BJ (cell line): ENCODE measurements at regions of chr22 and their contacts with region 1.

Region 1: GRCh38 chr22:37588546-37589215 is 8.8 kb upstream of the LGALS2 start:
- DNase-seq: no peak
- H3K4me3 ChIP-seq: no peak overlapping the region
- H3K27me3 ChIP-seq: peaks cover 10% of the 10 kb centered on the region
- CTCF ChIP-seq: no peak

Region 2: GRCh38 chr22:37538590-37539357 is 49.9 kb before region 1 on chr22:
- CTCF ChIA-PET with region 1: interaction called, 338 read pairs
- POLR2A ChIA-PET with region 1: interaction called, 3 read pairs
- DNase-seq: peak; percentile 45
- H3K4me3 ChIP-seq: no peak overlapping the region
- H3K27me3 ChIP-seq: no peaks in the 10 kb centered on the region
- CTCF ChIP-seq: peak; percentile 93

Region 3: DNA sequence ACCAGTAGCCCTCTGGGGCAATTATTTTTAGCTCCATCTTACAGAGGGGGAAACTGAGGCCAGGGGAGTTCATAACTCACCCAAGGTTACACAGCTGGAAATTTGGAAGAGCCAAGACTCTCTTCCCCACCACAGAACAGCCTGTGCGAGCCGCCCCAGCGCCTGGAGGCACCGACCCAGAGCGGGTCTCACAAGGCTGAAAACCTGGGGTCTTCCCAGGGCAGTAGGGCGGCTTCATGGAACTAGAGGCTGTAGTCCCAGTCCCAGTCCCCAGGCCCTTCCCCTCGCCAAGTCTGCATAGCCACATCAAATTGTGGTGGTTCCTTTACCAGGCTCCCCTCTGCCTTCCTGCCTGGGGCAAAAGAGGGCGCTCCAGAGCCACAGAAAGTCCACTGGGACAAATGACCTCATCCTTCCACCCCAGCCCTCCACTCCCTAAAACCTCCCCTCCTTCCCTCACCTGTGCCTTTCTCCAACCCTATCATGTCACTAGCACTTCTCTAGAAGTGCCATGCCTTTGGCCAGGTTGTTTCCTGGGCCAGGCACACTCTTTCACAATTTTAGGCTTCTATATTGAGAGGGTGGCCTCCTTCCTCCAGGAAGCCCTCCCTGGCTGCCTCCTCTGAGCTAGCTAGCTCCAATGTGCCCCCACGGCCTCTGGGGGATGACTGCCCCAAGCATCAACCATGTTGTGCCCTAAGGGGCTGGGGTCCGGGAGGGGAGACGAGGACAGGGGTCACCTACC is 43.6 kb before region 1 on chr22:
- CTCF ChIA-PET with region 1: interaction called, 338 read pairs
- POLR2A ChIA-PET with region 1: interaction called, 3 read pairs
- DNase-seq: no peak
- H3K4me3 ChIP-seq: peak overlapping the region; percentile 33
- H3K27me3 ChIP-seq: no peaks in the 10 kb centered on the region
- CTCF ChIP-seq: peak; percentile 83

Region 4: DNA sequence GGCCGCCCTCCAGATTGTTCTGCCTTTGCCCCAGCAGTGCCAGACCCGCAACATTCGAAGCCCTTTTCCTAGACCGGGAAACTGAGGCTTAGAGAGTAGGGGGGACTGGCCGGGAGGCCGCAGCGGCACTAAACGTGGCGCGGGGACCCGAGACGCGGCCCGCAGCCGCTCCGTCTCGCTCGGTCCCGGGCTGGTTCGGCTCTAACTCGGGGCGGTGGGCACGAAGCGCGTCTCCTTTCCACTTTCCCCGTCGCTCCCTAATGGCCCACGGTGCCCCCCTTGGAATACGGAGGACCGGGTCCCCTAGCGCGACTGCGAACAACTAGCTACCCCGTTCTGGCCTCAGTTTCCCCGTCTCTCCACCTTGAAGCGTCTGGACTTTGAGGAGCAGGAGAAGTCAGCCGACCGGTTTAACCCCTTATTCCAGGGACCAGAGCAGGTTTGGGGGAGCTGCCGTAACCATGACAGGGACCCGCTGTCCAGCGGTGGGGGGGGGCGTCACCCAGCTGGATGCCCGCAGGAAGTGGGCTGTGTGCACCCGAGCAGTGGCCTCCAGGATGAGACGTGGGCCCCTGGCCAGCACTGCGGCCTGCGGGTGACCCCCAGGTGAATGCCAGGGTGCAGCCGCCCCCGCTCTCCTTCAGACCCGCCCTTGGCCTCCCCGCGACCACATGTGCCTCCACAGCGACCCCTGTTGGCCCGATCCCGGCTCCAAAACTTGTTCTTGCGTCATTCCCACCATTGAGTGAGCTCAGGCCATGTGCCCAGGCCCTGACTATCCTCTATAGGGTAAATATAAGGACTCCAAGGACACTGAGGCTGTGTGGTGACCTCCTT is 27.3 kb before region 1 on chr22:
- CTCF ChIA-PET with region 1: interaction called, 23 read pairs
- POLR2A ChIA-PET with region 1: interaction called, 3 read pairs
- DNase-seq: no peak
- H3K4me3 ChIP-seq: peak overlapping the region; percentile 83
- H3K27me3 ChIP-seq: no peaks in the 10 kb centered on the region
- CTCF ChIP-seq: peak; percentile 92

Region 5: GRCh38 chr22:37566903-37567820 is 21.5 kb before region 1 on chr22:
- CTCF ChIA-PET with region 1: interaction called, 24 read pairs
- POLR2A ChIA-PET with region 1: interaction called, 3 read pairs
- DNase-seq: no peak
- H3K4me3 ChIP-seq: no peak overlapping the region
- H3K27me3 ChIP-seq: no peaks in the 10 kb centered on the region
- CTCF ChIP-seq: peak; percentile 91

Region 6: GRCh38 chr22:37575490-37576003 is 13.1 kb before region 1 on chr22:
- CTCF ChIA-PET with region 1: interaction called, 24 read pairs
- POLR2A ChIA-PET with region 1: interaction called, 9 read pairs
- DNase-seq: no peak
- H3K4me3 ChIP-seq: no peak overlapping the region
- H3K27me3 ChIP-seq: no peaks in the 10 kb centered on the region
- CTCF ChIP-seq: no peak

Region 7: GRCh38 chr22:37601540-37602442 is 13.1 kb after region 1 on chr22:
- CTCF ChIA-PET with region 1: interaction called, 25 read pairs
- POLR2A ChIA-PET with region 1: interaction called, 8 read pairs
- DNase-seq: no peak
- H3K4me3 ChIP-seq: no peak overlapping the region
- H3K27me3 ChIP-seq: peaks cover 3% of the 10 kb centered on the region; the same call in 1 of the 2 replicates
- CTCF ChIP-seq: no peak

Region 8: DNA sequence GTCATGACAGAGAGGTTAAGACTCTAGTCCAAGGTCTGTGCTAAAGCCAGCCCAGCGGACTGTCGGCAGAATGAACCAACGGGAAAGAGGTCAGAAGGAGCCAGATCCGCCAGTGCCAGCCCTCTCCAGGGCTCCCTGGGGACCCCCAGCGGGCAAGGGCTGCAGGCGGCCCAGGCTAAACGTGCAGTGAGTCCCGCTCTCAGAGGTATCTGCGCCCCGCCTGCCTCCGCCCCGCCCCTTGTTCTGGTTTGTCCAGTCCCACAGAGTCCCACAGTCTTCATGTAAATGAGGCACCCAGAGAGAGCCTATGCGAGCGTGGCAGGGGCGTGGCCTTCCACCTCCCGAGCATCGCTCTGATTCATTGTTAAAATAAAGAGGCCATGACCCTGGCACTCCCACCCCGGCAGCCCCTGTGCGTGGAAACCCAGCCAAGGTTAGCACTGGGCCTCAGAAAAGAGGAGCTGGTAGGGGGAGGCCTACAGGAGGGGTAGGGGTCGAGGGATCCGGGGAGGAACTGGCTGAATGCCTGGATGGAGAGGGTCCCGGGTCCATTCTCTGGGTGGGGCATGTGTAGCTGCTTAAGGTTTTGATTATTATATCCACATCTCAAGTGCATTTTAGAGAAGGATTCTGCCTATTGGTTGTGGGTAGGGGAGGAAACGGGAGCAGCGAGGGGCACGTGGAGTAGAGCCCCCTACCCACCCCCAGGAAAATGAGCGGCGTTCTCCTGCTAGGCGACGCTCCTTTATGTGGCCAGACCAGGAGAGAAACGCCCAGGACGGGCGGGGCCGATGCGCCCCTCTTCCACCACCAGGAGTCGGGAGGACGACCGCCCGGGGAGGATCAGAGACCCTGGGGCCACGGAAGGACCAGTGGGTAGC is 108.2 kb after region 1 on chr22 and contains the start of gene TRIOBP:
- CTCF ChIA-PET with region 1: no interaction called
- POLR2A ChIA-PET with region 1: no interaction called
- DNase-seq: peak; percentile 71
- H3K4me3 ChIP-seq: peak within 1 kb of the TSS; percentile 13; the same call in 1 of the 2 replicates
- H3K27me3 ChIP-seq: no peaks in the 10 kb centered on the region
- CTCF ChIP-seq: peak; percentile 73
- polyA plus RNA-seq, gene TRIOBP: 52.0 and 73.9 TPM in 2 replicates

Region 9: GRCh38 chr22:37716708-37717107 is 128.0 kb after region 1 on chr22:
- CTCF ChIA-PET with region 1: no interaction called
- POLR2A ChIA-PET with region 1: no interaction called
- DNase-seq: no peak
- H3K4me3 ChIP-seq: no peak overlapping the region
- H3K27me3 ChIP-seq: no peaks in the 10 kb centered on the region
- CTCF ChIP-seq: no peak

Region 10: GRCh38 chr22:37774728-37775127 is 186.0 kb after region 1 on chr22:
- CTCF ChIA-PET with region 1: no interaction called
- POLR2A ChIA-PET with region 1: no interaction called
- DNase-seq: no peak
- H3K4me3 ChIP-seq: no peak overlapping the region
- H3K27me3 ChIP-seq: no peaks in the 10 kb centered on the region; the same call in 1 of the 2 replicates
- CTCF ChIP-seq: no peak

Region 11: DNA sequence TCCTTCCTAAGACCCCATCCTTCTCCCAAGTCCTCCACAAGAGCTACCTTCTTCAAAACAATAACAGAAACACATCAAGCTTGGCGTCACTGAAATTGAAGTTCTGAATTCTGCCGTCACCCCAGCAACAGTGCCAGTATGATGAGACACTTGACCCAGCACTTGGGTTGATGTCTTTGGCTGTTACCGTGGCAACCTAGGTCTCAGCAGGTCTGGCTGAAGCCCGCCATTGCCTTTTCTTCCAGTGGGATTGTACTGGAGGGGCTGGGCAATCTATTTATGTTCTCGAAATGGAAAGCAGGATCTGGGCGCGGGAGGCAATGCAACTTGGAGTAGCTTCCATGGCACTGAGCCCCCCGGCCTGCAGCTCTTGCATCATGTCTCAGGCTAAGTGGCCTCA is 1231.3 kb after region 1 on chr22:
- CTCF ChIA-PET with region 1: no interaction called
- POLR2A ChIA-PET with region 1: no interaction called
- DNase-seq: no peak
- H3K4me3 ChIP-seq: no peak overlapping the region
- H3K27me3 ChIP-seq: peaks cover 4% of the 10 kb centered on the region
- CTCF ChIP-seq: no peak